Sigmoid colon (tissue), 7 donors: ENCODE measurements at regions of chr4 and their contacts with region 1.

Region 1: GRCh38 chr4:2462218-2462991 is 6.5 kb upstream of the RNF4 start:
- DNase-seq: peak; percentile 85
- H3K4me3 ChIP-seq: peak overlapping the region; percentile 31 to 60 (median 58)
- H3K27ac ChIP-seq: peak overlapping the region; percentile 70 to 81 (median 76)
- H3K4me1 ChIP-seq: peaks cover 0 to 21% (median 16%) of the 10 kb centered on the region in 4 donors
- H3K27me3 ChIP-seq: no peaks in the 10 kb centered on the region
- CTCF ChIP-seq: peak in 1 of 4 experiments; percentile 66
- EP300 ChIP-seq: no peak
- POLR2A ChIP-seq: no peak

Region 2: DNA sequence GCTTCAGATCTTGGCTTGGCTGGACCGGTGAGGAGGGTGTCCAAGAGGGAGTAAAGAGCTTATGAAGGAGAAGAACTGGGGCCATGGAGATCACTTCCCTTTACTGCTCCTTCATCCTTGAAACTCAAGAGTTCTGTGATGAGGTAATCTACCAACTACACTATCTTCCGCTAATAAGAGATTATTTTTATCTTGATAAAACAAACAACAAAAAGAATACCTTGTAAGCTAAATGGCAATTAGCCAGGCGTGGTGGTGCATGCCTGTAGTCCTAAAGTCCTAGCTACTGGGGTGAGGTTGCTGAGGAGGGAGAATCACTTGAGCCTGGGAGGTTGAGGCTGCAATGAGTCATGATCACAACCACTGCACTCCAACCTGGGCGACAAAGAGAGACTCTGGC is 267.9 kb before region 1 on chr4:
- intact Hi-C with region 1: no loop called
- DNase-seq: no peak
- H3K4me3 ChIP-seq: no peak overlapping the region
- H3K27ac ChIP-seq: no peak overlapping the region
- H3K4me1 ChIP-seq: no peaks in the 10 kb centered on the region
- H3K27me3 ChIP-seq: no peaks in the 10 kb centered on the region
- CTCF ChIP-seq: no peak
- EP300 ChIP-seq: no peak
- POLR2A ChIP-seq: no peak

Region 3: GRCh38 chr4:2220016-2220630 is 242.3 kb before region 1 on chr4:
- intact Hi-C with region 1: loop called (anchors 5 kb)
- DNase-seq: peak; percentile 77
- H3K4me3 ChIP-seq: no peak overlapping the region
- H3K27ac ChIP-seq: no peak overlapping the region
- H3K4me1 ChIP-seq: peaks cover 0 to 7% (median 0%) of the 10 kb centered on the region in 4 donors
- H3K27me3 ChIP-seq: no peaks in the 10 kb centered on the region
- CTCF ChIP-seq: peak; percentile 75 to 78 (median 76)
- EP300 ChIP-seq: no peak
- POLR2A ChIP-seq: no peak

Region 4: GRCh38 chr4:2241410-2242353 is 220.7 kb before region 1 on chr4 and contains the starts of genes HAUS3 and POLN:
- intact Hi-C with region 1: loop called (anchors 5 kb)
- DNase-seq: peak; percentile 99
- H3K4me3 ChIP-seq: peak within 1 kb of the TSS; percentile 72 to 86 (median 85)
- H3K27ac ChIP-seq: peak within 1 kb of the TSS; percentile 80 to 84 (median 82)
- H3K4me1 ChIP-seq: peaks cover 0 to 51% (median 41%) of the 10 kb centered on the region in 4 donors
- H3K27me3 ChIP-seq: no peaks in the 10 kb centered on the region
- CTCF ChIP-seq: no peak
- EP300 ChIP-seq: no peak
- POLR2A ChIP-seq: peak; percentile 76 to 84
- total RNA-seq, gene HAUS3: 12.1 to 18.5 (median 16.4) TPM
- total RNA-seq, gene POLN: 1.8 to 9.4 (median 2.6) TPM